Endothelial cell of umbilical vein (primary cell): ENCODE measurements at regions of chr1 and their contacts with region 1.

Region 1: GRCh38 chr1:12124693-12125421 is 41.9 kb upstream of the TNFRSF1B start:
- DNase-seq: peak; percentile 77
- H3K4me3 ChIP-seq: no peak overlapping the region
- H3K27ac ChIP-seq: no peak overlapping the region
- H3K4me1 ChIP-seq: peaks cover 9% of the 10 kb centered on the region
- H3K27me3 ChIP-seq: peaks cover 0 to 3% of the 10 kb centered on the region in 2 experiments
- CTCF ChIP-seq: peak; percentile 77 to 91
- POLR2A ChIP-seq: no peak

Region 2: GRCh38 chr1:10209905-10210810 is 1914.7 kb before region 1 on chr1 and contains the start of gene KIF1B:
- CTCF ChIA-PET with region 1: no interaction called
- POLR2A ChIA-PET with region 1: no interaction called
- dilution Hi-C with region 1: no loop called
- intact Hi-C with region 1: no loop called
- DNase-seq: peak; percentile 98
- H3K4me3 ChIP-seq: peak within 1 kb of the TSS; percentile 68 to 83 (median 79)
- H3K27ac ChIP-seq: peak within 1 kb of the TSS; percentile 87
- H3K4me1 ChIP-seq: peaks cover 15% of the 10 kb centered on the region
- H3K27me3 ChIP-seq: no peaks in the 10 kb centered on the region
- CTCF ChIP-seq: peak; percentile 98 to 99
- POLR2A ChIP-seq: peak; percentile 55
- total RNA-seq, gene KIF1B: 46.6 and 58.6 TPM in 2 replicates

Region 3: DNA sequence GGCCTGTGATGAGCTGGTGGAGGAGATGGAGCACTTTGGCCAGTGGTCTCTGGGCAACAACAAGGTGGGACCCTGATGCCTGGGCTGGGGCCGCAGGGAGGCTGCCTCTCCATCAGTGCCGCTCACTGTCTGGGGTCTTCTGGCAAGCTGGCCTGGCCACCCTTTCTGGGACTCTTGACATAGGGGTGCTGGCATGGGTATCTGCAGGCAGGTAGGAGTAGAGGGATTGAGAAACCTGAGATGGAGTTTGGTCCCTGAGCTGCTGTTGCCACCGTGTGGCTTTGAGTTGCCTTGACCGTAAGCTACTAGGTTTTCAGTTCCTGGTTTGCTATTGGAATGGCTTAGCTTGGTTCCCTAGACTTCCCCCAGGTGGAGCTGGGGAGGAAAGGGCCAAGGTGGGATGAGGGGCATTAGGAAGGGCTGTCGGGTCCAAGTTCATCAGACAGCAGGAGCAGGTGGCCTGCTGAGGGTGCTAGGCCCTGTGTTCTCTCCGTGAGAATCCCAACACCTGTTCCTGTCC is 157.8 kb before region 1 on chr1:
- CTCF ChIA-PET with region 1: no interaction called
- POLR2A ChIA-PET with region 1: no interaction called
- dilution Hi-C with region 1: no loop called
- intact Hi-C with region 1: no loop called
- DNase-seq: peak; percentile 37
- H3K4me3 ChIP-seq: no peak overlapping the region
- H3K27ac ChIP-seq: no peak overlapping the region
- H3K4me1 ChIP-seq: no peaks in the 10 kb centered on the region
- H3K27me3 ChIP-seq: no peaks in the 10 kb centered on the region
- CTCF ChIP-seq: peak; percentile 25 to 50
- POLR2A ChIP-seq: no peak

Region 4: DNA sequence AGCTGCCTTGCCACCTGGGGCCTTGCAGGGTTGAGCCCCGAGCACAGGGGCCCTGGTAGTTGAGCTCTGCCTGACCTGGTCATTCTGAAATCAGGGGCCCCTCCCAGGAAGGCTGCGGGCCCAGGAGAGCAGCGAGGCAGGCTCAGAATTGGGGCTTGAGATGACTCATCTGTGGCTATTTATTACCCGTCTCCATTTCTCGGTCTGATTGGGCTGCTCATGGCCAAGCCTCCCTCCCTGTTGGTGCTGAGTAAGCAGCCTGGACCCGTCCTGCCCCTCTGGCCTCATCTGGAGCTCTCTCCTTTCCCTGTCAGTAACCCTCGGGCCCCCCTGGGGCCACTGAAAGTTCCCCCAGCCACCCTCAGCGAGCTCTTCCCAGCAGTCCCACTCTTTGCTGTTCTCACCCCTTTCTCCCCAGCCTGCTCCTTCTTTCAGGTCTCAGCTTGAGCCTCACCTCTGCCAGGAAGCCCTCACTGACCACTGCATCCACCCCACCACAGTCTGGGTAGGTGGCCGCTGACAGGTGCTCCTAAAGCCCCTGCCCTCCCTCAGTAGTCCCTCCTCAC is 72.8 kb before region 1 on chr1:
- CTCF ChIA-PET with region 1: no interaction called
- POLR2A ChIA-PET with region 1: no interaction called
- dilution Hi-C with region 1: no loop called
- intact Hi-C with region 1: no loop called
- DNase-seq: no peak
- H3K4me3 ChIP-seq: no peak overlapping the region
- H3K27ac ChIP-seq: no peak overlapping the region
- H3K4me1 ChIP-seq: no peaks in the 10 kb centered on the region
- H3K27me3 ChIP-seq: no peaks in the 10 kb centered on the region
- CTCF ChIP-seq: no peak
- POLR2A ChIP-seq: no peak

Region 5: DNA sequence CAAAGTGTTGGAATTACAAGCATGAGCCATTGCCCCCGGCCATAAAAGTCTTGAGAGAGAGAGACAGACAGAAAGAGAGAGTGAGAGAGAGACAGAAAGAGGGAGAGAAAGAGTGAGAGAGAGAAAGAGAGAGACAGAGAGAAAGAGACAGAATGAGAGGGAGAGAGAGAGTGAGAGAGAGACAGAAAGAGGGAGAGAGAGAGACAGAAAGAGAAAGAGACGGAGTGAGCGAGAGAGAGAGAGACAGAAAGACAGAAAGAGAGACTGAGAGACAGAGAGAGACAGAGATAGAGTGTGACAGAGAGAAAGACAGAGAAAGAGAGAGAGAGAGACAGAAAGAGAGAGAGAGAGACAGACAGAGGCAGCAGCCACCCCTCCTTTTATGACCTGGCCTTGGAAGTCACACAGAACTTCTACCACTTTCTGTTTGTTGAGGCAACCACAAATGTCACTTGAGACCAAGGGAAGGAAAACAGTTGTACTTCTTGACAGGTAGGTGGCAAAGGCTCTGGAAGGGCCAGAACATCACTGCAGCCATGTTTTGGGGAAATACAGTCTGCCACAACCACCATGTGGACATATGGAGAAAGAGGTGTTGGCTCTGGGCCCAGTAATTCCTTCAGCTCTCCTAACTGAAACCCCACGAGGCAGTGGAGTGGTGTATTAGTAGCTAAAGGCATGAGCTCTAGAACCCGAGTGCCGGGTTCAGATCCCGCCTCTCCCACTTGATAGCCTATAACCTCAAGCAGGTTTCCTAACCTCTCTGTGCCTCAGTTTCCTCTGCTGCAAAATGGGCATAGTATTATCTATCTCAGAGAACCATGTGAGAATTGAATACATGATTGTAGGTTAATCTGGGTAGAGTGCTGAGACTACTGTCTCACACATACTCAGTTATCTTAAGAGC is 11.2 kb before region 1 on chr1:
- CTCF ChIA-PET with region 1: interaction called, 18 read pairs
- POLR2A ChIA-PET with region 1: no interaction called
- dilution Hi-C with region 1: no loop called
- intact Hi-C with region 1: no loop called
- DNase-seq: no peak
- H3K4me3 ChIP-seq: no peak overlapping the region
- H3K27ac ChIP-seq: no peak overlapping the region
- H3K4me1 ChIP-seq: no peaks in the 10 kb centered on the region
- H3K27me3 ChIP-seq: peaks cover 0 to 3% of the 10 kb centered on the region in 2 experiments
- CTCF ChIP-seq: no peak
- POLR2A ChIP-seq: no peak

Region 6: DNA sequence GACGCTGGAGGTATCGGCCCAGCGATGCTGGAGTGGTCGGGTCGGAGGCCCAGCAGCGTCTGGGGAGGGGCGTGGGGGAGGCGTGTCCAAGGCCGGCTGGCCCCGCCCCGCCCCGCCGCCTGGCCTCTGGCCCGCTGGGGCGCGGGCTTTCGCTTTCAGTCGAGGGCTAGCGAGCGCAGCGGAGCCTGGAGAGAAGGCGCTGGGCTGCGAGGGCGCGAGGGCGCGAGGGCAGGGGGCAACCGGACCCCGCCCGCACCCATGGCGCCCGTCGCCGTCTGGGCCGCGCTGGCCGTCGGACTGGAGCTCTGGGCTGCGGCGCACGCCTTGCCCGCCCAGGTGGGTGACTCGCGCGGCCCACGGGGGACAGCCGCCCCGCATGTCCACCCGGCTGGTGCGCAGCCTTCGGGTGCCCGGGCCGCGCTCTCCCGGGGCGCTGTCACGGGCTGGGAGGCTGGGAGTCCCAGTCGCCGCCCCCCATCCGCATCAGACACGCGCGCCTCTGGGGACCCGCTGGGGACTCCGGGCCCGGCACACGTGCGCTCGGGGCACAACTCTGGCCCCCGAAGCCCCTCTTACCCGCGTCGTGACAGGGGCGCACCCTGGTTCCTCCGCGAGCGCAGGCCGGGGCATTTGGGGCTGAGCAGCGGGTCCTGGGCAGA is 42.1 kb after region 1 on chr1 and contains the start of gene TNFRSF1B:
- CTCF ChIA-PET with region 1: interaction called, 48 read pairs
- POLR2A ChIA-PET with region 1: no interaction called
- dilution Hi-C with region 1: no loop called
- intact Hi-C with region 1: no loop called
- DNase-seq: peak; percentile 71
- H3K4me3 ChIP-seq: peak within 1 kb of the TSS; percentile 74 to 84 (median 77)
- H3K27ac ChIP-seq: peak within 1 kb of the TSS; percentile 25
- H3K4me1 ChIP-seq: peaks cover 25% of the 10 kb centered on the region
- H3K27me3 ChIP-seq: no peaks in the 10 kb centered on the region
- CTCF ChIP-seq: no peak
- POLR2A ChIP-seq: peak; percentile 85
- total RNA-seq, gene TNFRSF1B: 65.9 and 66.0 TPM in 2 replicates

Region 7: DNA sequence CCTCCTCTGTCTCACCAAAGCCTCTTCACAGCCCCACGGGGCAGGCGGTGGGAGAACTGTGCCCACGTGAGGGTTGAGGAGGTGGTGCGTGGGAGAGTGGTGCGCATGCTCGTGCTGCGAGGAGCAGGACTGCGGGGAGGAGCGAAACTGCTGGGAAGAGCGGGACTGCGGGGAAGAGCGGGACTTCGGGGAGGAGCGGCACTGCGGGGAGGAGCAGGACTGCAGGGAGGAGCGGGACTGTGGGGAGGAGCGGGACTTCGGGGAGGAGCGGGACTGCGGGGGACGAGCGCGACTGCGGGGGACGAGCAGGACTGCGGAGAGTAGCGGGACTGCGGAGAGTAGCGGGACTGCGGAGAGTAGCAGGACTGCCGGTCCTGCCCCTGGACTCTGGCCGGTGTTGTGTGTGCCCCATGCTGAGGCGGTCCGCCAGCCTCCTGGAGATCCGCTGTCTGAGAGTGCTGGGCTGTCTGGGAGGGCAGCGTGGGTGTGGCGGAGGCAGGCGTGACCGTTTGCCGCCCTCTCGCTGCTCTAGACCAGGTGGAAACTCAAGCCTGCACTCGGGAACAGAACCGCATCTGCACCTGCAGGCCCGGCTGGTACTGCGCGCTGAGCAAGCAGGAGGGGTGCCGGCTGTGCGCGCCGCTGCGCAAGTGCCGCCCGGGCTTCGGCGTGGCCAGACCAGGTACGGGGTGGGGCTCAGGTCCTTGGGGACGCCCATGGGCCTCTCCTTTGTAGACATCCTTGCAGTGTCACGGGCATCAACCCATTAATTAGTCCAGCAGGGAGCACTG is 66.6 kb after region 1 on chr1:
- CTCF ChIA-PET with region 1: interaction called, 537 read pairs
- POLR2A ChIA-PET with region 1: no interaction called
- dilution Hi-C with region 1: no loop called
- intact Hi-C with region 1: no loop called
- DNase-seq: no peak
- H3K4me3 ChIP-seq: no peak overlapping the region
- H3K27ac ChIP-seq: no peak overlapping the region
- H3K4me1 ChIP-seq: no peaks in the 10 kb centered on the region
- H3K27me3 ChIP-seq: no peaks in the 10 kb centered on the region
- CTCF ChIP-seq: no peak
- POLR2A ChIP-seq: no peak

Region 8: DNA sequence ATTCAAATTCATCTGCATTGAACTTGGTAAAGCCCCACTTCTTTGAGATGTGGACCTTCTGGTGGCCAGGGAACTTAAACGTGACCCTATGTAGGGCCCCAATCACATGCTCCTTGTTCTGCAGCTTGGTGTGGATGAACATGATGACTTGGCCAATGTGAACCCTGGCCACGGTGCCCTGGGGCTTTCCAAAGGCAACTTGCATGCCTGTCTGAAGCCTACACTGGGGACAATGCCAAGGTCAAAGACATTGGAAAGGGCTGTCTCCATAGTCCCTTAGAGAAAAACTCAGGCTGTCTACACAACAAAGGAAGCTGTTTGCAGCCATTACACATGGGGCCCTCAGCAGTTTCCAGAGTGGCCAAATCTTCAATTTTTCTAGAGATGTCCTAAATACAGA is 96.0 kb after region 1 on chr1:
- CTCF ChIA-PET with region 1: interaction called, 57 read pairs
- POLR2A ChIA-PET with region 1: no interaction called
- dilution Hi-C with region 1: no loop called
- intact Hi-C with region 1: no loop called
- DNase-seq: no peak
- H3K4me3 ChIP-seq: no peak overlapping the region
- H3K27ac ChIP-seq: no peak overlapping the region
- H3K4me1 ChIP-seq: no peaks in the 10 kb centered on the region
- H3K27me3 ChIP-seq: peaks cover 2% of the 10 kb centered on the region in 2 experiments
- CTCF ChIP-seq: no peak
- POLR2A ChIP-seq: no peak

Region 9: DNA sequence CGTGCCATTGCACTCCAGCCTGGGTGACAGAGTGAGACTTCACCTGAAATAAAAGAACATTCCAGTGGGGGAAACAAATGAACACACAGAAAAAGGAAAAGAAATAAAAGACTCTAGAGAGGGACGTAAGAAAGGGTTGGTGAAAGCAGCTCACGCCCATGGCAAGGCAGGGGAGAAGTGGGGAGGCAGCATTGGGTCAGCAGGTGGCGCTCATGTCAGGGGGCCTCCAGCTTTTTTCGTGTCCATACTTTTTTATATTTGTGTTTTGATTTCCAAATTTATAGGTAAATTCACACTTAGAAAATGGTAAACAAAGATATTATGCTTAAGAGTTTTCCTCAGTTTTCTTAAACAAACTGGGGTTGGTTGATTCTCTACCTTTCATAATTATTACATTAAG is 150.5 kb after region 1 on chr1:
- CTCF ChIA-PET with region 1: interaction called, 26 read pairs
- POLR2A ChIA-PET with region 1: no interaction called
- dilution Hi-C with region 1: no loop called
- intact Hi-C with region 1: no loop called
- DNase-seq: peak; percentile 20
- H3K4me3 ChIP-seq: no peak overlapping the region
- H3K27ac ChIP-seq: no peak overlapping the region
- H3K4me1 ChIP-seq: no peaks in the 10 kb centered on the region
- H3K27me3 ChIP-seq: no peaks in the 10 kb centered on the region
- CTCF ChIP-seq: peak; percentile 69 to 73
- POLR2A ChIP-seq: no peak

Region 10: DNA sequence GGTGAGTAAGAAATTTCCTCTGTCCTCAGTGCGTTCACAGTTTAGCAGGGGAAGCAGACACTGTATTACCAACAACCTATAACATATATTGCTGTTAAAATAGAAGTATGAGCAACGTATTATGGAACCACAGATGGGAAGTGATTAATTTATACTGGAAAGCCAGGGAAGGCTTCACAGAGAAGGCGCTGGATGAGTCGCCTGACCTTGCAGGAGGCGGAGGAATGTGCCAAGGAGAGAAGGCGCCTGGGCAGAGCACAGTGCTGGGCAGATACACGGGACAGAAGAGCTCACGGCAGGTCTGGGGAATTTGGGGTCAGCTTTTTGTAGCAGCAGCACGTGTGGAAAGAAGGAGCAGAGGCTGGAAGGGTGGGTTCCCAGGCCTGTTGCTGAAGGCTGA is 376.8 kb after region 1 on chr1:
- CTCF ChIA-PET with region 1: no interaction called
- POLR2A ChIA-PET with region 1: no interaction called
- dilution Hi-C with region 1: no loop called
- intact Hi-C with region 1: no loop called
- DNase-seq: peak; percentile 76
- H3K4me3 ChIP-seq: no peak overlapping the region
- H3K27ac ChIP-seq: no peak overlapping the region
- H3K4me1 ChIP-seq: peaks cover 9% of the 10 kb centered on the region
- H3K27me3 ChIP-seq: no peaks in the 10 kb centered on the region
- CTCF ChIP-seq: no peak
- POLR2A ChIP-seq: no peak